HepG2 (cell line): ENCODE measurements at regions of chr15 and their contacts with region 1.

Region 1: DNA sequence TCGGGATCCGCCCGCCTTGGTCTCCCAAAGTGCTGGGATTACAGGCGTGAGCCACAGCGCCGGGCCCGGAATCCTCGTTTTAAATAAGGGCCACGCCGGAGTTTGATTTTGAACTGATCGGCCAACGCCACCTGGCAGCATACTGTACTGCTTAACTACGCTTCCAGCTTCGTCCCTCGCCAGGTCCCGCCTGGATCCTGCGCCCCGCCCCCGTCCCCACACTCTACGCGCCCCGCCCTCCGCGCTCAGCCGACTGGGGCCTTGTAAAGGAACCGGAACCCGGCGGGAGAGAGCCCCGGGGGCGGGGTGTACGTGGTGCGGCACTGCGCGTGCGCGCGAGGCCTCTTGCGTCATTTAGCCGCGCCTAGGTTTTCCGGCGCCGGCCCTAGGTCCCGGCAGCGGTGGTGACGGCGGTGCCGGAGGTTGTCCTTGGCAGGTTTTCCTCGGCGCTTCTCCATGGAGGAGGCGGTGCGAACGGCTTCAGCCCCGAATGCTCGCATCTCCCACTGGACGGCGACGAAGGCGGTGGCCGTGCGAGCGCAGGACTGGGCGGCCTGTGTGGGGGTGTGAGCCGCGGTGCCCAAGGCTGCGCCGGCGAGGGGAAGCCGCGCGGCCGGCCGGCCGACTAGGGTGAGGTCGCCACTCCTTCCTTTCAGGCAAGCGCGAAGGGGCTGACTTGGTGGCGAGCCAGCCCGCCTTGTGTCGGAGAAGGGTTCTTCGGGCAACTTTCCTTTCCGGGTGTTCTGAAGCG is at the start of gene NIPA2:
- DNase-seq: peak; percentile 92
- ATAC-seq: peak; percentile 98
- H3K4me3 ChIP-seq: peak within 1 kb of the TSS; percentile 79 to 100 (median 91)
- H3K27ac ChIP-seq: peak within 1 kb of the TSS; percentile 86
- H3K4me1 ChIP-seq: peaks cover 34% of the 10 kb centered on the region
- H3K27me3 ChIP-seq: no peaks in the 10 kb centered on the region; a peak in 2 of 5 replicates
- CTCF ChIP-seq: peak; percentile 35
- EP300 ChIP-seq: no peak
- POLR2A ChIP-seq: peak; percentile 83 to 87
- RAD21 ChIP-seq: no peak
- total RNA-seq, gene NIPA2: 56.2 and 57.9 TPM in 2 replicates

Region 2: DNA sequence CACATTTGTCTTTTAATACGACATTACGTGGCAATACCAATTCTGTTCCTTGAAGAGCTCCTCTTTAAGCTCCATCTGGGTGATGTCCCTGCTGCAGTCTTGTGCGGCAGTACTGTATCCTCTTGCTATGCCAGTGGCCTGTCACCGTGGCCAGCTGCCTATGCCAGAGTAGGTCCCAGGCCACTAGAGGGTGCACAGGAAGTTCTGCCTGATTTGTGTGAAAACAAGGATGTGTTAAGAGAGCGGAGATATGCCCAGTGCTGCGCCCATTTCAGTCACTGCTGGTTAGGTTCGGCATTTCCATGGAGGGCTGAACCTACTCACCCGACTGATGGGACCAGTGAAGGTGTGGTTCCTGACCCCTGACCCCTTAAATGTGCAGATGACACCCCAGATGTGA is 26.8 kb before region 1 on chr15:
- CTCF ChIA-PET with region 1: no interaction called
- POLR2A ChIA-PET with region 1: no interaction called
- in situ Hi-C with region 1: no loop called
- intact Hi-C with region 1: no loop called
- DNase-seq: peak; percentile 39
- ATAC-seq: peak; percentile 97
- H3K4me3 ChIP-seq: no peak overlapping the region
- H3K27ac ChIP-seq: no peak overlapping the region
- H3K4me1 ChIP-seq: 0 out of 2 replicates have a peak, but pooled peaks cover 9% of the 10 kb centered on the region
- H3K27me3 ChIP-seq: no peaks in the 10 kb centered on the region
- CTCF ChIP-seq: peak; percentile 69
- EP300 ChIP-seq: no peak
- POLR2A ChIP-seq: no peak
- RAD21 ChIP-seq: 0 out of 2 replicates have a peak, but pooled peaks have one; percentile 22

Region 3: DNA sequence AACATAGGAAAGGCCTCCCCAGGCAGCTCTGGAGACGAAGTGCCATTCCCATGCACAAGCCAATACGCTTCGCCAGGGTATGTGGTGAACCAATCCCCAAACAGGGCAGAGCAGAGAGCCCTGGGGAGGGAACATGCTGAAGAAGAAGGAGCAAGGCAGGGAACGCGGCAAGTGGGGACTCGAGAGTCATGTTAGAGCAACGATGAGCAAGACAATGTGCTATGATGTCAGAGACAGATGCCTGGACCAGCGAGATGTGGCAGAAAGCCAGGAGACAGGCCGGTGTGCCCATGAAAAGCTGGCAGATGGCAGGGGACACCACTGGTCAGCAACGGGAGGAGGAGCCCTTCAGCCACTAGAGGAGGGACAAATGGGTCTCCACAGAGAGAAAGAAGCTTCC is 39.6 kb after region 1 on chr15:
- CTCF ChIA-PET with region 1: no interaction called
- POLR2A ChIA-PET with region 1: no interaction called
- in situ Hi-C with region 1: no loop called
- intact Hi-C with region 1: loop called (anchors 5 kb)
- DNase-seq: no peak
- ATAC-seq: no peak
- H3K4me3 ChIP-seq: no peak overlapping the region
- H3K27ac ChIP-seq: no peak overlapping the region
- H3K4me1 ChIP-seq: no peaks in the 10 kb centered on the region
- H3K27me3 ChIP-seq: no peaks in the 10 kb centered on the region
- CTCF ChIP-seq: no peak
- EP300 ChIP-seq: no peak
- POLR2A ChIP-seq: no peak
- RAD21 ChIP-seq: no peak

Region 4: GRCh38 chr15:22980189-22981050 is 142.0 kb after region 1 on chr15 and contains the start of gene CYFIP1:
- CTCF ChIA-PET with region 1: no interaction called
- POLR2A ChIA-PET with region 1: no interaction called
- in situ Hi-C with region 1: no loop called
- intact Hi-C with region 1: loop called (anchors 10 kb)
- DNase-seq: peak; percentile 68
- ATAC-seq: peak; percentile 84
- H3K4me3 ChIP-seq: peak within 1 kb of the TSS; percentile 66 to 99 (median 96)
- H3K27ac ChIP-seq: peak within 1 kb of the TSS; percentile 54
- H3K4me1 ChIP-seq: peaks cover 21% of the 10 kb centered on the region
- H3K27me3 ChIP-seq: no peaks in the 10 kb centered on the region; a peak in 1 of 5 replicates
- CTCF ChIP-seq: no peak
- EP300 ChIP-seq: no peak
- POLR2A ChIP-seq: peak; percentile 15 to 59; a peak in 2 of 4 replicates
- RAD21 ChIP-seq: 0 out of 2 replicates have a peak, but pooled peaks have one; percentile 6
- total RNA-seq, gene CYFIP1: 58.3 and 68.2 TPM in 2 replicates